AG04449 (cell line): ENCODE measurements at regions of chr9 and their contacts with region 1.

Region 1: GRCh38 chr9:4792572-4793458 is at the start of gene RCL1:
- DNase-seq: peak; percentile 45
- H3K4me3 ChIP-seq: peak within 1 kb of the TSS; percentile 93
- CTCF ChIP-seq: no peak

Region 2: DNA sequence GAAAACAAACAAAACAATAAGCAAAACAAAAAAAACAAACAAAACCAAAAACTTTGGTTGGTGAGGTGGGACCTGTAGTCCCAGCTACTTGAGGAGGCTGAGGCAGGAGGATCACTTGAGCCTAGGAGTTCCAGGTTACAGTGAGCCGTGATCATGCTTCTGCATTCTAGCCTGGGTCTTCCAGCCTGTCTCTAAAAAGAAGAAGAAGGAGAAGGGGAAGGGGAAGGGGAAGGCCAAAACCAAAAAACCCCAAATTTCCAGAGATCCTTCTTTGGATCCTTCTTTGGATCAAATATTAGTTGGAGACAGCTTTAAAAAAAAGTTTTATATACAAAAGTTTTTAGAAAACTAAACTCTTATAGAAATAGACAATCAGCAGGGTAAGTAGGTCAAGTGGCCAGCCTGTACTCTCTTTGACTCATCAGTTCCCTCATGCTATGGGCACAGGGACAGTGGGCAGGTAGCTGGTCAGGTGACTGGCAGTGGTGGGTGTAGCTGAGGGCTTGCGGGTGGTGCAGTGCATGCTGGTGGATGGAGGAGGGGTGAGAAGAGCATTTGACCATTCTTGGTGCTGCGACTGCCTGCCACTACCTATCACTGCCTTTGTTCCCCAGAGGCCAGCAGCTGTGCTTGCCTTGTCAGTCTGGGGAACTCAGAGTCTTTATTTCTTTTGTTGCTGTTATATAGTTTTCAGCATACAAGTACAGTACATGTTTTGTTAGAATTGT is 12.5 kb after region 1 on chr9:
- CTCF ChIA-PET with region 1: interaction called, 27 read pairs
- POLR2A ChIA-PET with region 1: no interaction called
- DNase-seq: no peak
- H3K4me3 ChIP-seq: no peak overlapping the region
- CTCF ChIP-seq: no peak

Region 3: GRCh38 chr9:4814913-4815312 is 22.1 kb after region 1 on chr9:
- CTCF ChIA-PET with region 1: interaction called, 27 read pairs
- POLR2A ChIA-PET with region 1: no interaction called
- DNase-seq: no peak
- H3K4me3 ChIP-seq: no peak overlapping the region
- CTCF ChIP-seq: no peak

Region 4: DNA sequence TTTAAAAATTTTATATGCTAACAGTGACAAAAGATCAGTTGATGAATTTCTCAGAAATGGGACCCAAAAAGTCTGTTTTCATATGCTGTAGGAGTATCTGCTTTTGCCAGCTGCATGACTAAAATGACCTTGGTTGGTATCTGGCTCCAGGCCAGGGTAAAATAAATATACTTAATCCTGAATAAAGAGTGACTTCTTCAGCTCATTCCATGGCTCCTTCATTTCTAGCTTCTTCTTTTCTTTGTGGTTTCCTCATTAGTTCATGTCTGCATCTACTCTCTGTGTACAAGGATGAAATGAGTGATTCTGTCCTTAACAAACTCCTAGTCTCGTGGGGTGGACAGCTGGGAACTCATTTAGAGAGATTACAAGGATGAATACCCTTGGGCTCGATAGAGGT is 35.9 kb after region 1 on chr9:
- CTCF ChIA-PET with region 1: interaction called, 16 read pairs
- POLR2A ChIA-PET with region 1: no interaction called
- DNase-seq: no peak
- H3K4me3 ChIP-seq: no peak overlapping the region
- CTCF ChIP-seq: no peak